ENCODE measurements at regions of chr3 and their contacts with region 1.

Region 1: DNA sequence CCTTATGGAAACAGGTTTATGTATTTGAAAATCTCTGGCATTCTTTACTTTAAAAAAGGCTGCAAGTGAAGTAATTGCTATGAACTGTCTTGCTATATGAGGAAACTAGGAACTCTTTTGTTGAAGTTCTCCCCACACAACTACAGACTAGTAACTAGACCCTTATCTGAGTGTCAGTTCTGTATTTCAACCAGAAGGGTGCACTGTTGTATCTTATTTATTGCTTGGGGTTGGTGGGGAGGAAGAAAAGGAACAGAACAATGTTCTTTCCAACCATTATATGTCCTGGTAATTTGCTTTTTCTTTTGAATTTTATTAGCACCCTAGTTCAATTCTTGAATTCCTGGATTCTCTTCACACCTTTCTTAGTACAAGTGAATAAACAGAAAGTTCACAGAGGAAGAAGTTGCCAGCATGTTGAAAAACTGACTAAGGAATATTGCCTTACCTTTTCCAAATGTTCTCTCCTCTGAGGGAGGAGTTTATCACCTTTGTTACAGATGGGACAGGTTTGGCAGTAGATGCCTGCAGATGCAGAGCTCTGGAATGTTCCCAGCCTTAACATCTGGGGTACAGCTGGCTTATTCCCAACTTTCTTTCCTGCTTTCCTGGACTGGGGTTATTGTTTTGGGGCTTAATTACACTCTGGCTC is 162.4 kb upstream of the CFAP20DC start:
- DNase-seq: no peak
- ATAC-seq: peak; percentile 74
- H3K4me3 Mint-ChIP-seq: no peak overlapping the region
- H3K27ac Mint-ChIP-seq: no peak overlapping the region
- H3K4me1 Mint-ChIP-seq: peaks cover 6% of the 10 kb centered on the region
- H3K27me3 Mint-ChIP-seq: peaks cover 12% of the 10 kb centered on the region

Region 2: GRCh38 chr3:58783845-58784244 is 428.4 kb before region 1 on chr3:
- CTCF ChIA-PET with region 1: no interaction called
- POLR2A ChIA-PET with region 1: no interaction called
- intact Hi-C with region 1: no loop called
- DNase-seq: no peak
- ATAC-seq: no peak
- H3K4me3 Mint-ChIP-seq: no peak overlapping the region
- H3K27ac Mint-ChIP-seq: no peak overlapping the region
- H3K4me1 Mint-ChIP-seq: no peaks in the 10 kb centered on the region
- H3K27me3 Mint-ChIP-seq: no peaks in the 10 kb centered on the region

Region 3: GRCh38 chr3:59286791-59287531 is 74.7 kb after region 1 on chr3:
- CTCF ChIA-PET with region 1: interaction called, 5 read pairs
- POLR2A ChIA-PET with region 1: no interaction called
- intact Hi-C with region 1: loop called in 1 of 2 experiments (anchors 5 kb)
- DNase-seq: peak; percentile 63
- ATAC-seq: peak; percentile 96
- H3K4me3 Mint-ChIP-seq: no peak overlapping the region
- H3K27ac Mint-ChIP-seq: peak overlapping the region; percentile 78
- H3K4me1 Mint-ChIP-seq: peaks cover 29% of the 10 kb centered on the region
- H3K27me3 Mint-ChIP-seq: peaks cover 3% of the 10 kb centered on the region

Region 4: GRCh38 chr3:59809710-59810444 is 597.6 kb after region 1 on chr3:
- CTCF ChIA-PET with region 1: interaction called, 6 read pairs
- POLR2A ChIA-PET with region 1: no interaction called
- intact Hi-C with region 1: loop called in 1 of 2 experiments (anchors 5 kb)
- DNase-seq: no peak
- ATAC-seq: peak; percentile 30
- H3K4me3 Mint-ChIP-seq: no peak overlapping the region
- H3K27ac Mint-ChIP-seq: no peak overlapping the region
- H3K4me1 Mint-ChIP-seq: peaks cover 6% of the 10 kb centered on the region
- H3K27me3 Mint-ChIP-seq: no peaks in the 10 kb centered on the region